Heart left ventricle (tissue), 16 donors: ENCODE measurements at regions of chr17 and their contacts with region 1.

Region 1: GRCh38 chr17:69414408-69415274 is at the start of gene MAP2K6:
- DNase-seq: peak; percentile 79 to 91 (median 81)
- ATAC-seq: peak; percentile 93 to 99 (median 98)
- H3K4me3 ChIP-seq: peak within 1 kb of the TSS; percentile 12 to 75 (median 59)
- H3K27ac ChIP-seq: peak within 1 kb of the TSS in 9 of 12 donors; percentile 4 to 62 (median 43)
- H3K4me1 ChIP-seq: peaks cover 0 to 35% (median 15%) of the 10 kb centered on the region in 12 donors
- H3K27me3 ChIP-seq: no peaks in the 10 kb centered on the region
- CTCF ChIP-seq: no peak
- POLR2A ChIP-seq: no peak
- total RNA-seq, gene MAP2K6: 0.83 to 5.1 (median 1.8) TPM

Region 2: DNA sequence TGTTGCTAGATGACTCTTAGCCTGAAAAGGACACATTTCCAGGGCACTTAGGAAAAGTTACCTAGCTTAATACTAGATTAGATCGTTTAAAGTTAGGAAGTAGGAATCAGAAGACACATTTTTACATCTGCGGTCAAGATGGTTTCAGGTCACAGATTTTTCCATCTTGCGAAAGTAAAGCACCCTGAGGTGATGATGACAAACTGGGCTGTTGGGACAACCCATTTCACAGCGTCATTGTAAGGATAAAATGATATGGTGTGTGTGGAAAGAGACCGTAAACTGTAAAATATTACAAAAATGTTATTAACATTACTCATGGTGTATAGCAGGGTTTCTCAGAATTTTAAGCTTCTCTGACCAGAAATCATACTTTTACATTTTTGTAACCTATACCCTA is 10.3 kb before region 1 on chr17:
- intact Hi-C with region 1: no loop called
- DNase-seq: no peak
- ATAC-seq: no peak
- H3K4me3 ChIP-seq: no peak overlapping the region
- H3K27ac ChIP-seq: no peak overlapping the region
- H3K4me1 ChIP-seq: no peaks in the 10 kb centered on the region
- H3K27me3 ChIP-seq: no peaks in the 10 kb centered on the region
- CTCF ChIP-seq: no peak
- POLR2A ChIP-seq: no peak

Region 3: DNA sequence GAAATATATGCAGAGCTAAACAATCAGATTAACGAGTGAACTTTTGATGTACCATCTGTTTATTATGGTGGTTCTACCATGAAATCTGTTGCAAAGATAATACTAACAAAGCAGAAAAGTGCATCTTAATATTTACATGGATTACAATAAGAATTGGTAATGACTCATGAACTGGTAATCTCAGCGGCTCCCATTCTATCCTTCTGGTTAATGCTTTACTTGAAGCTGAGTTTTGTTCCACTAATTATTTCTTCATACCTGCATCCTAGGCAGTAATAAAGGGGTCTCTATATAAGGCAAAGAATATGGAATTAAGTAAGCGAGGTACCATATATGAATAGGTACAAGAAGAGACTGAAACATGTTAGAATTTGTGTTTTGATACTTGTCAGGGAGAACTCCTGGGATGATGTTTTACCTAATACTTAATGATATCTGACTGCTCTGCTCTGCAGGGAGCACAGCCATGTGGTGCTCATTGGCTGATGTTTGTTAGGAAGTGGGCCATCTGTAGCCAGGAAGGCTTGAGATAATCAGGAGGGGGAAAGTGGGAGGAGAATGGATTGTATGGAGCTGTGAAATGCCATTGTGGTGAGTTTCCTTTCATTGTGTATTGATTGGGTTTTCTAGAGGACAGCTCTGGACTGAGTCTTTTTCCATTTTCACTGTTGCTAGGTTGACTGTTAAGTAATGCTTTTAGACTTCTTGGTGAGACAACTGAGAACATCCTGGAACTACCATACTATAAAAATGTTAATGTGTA is 52.4 kb after region 1 on chr17:
- intact Hi-C with region 1: loop called in 1 of 10 experiments (anchors 10 kb)
- DNase-seq: no peak
- ATAC-seq: peak in 3 of 4 donors; percentile 34 to 83 (median 41)
- H3K4me3 ChIP-seq: no peak overlapping the region
- H3K27ac ChIP-seq: no peak overlapping the region
- H3K4me1 ChIP-seq: peaks cover 0 to 4% (median 0%) of the 10 kb centered on the region in 12 donors
- H3K27me3 ChIP-seq: no peaks in the 10 kb centered on the region
- CTCF ChIP-seq: no peak
- POLR2A ChIP-seq: no peak

Region 4: GRCh38 chr17:69485901-69486643 is 71.4 kb after region 1 on chr17:
- intact Hi-C with region 1: loop called in 1 of 10 experiments (anchors 10 kb)
- DNase-seq: no peak
- ATAC-seq: peak in 3 of 4 donors; percentile 36 to 48 (median 44)
- H3K4me3 ChIP-seq: peak overlapping the region in 1 of 12 donors; percentile 24
- H3K27ac ChIP-seq: peak overlapping the region; percentile 6 to 83 (median 42)
- H3K4me1 ChIP-seq: peaks cover 0 to 26% (median 13%) of the 10 kb centered on the region in 12 donors
- H3K27me3 ChIP-seq: no peaks in the 10 kb centered on the region
- CTCF ChIP-seq: peak in 1 of 12 donors; percentile 10
- POLR2A ChIP-seq: no peak

Region 5: DNA sequence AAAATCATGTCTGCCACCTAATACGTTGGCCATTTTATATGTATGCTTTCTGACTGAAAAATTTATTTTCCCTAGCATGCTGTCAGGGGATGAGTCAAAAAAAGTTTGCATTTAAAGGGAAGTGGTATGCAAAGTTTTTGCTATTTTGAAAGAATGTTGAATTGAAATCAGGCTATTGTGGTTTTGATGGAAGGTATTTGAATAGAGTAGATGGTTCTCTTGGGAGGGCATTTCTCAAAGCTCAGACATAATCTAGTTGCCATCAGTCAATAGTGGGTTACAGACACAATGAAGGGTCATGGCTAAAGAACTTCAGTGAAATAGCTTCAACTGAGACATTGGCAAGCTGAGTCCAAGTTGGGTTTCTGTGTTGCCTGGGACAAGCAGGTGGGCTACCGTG is 102.3 kb after region 1 on chr17:
- intact Hi-C with region 1: loop called in 3 of 10 experiments (anchors 5 to 10 kb)
- DNase-seq: no peak
- ATAC-seq: no peak
- H3K4me3 ChIP-seq: no peak overlapping the region
- H3K27ac ChIP-seq: no peak overlapping the region
- H3K4me1 ChIP-seq: no peaks in the 10 kb centered on the region
- H3K27me3 ChIP-seq: no peaks in the 10 kb centered on the region
- CTCF ChIP-seq: no peak
- POLR2A ChIP-seq: no peak

Region 6: GRCh38 chr17:69523244-69523861 is 108.7 kb after region 1 on chr17:
- intact Hi-C with region 1: loop called in 3 of 10 experiments (anchors 5 to 10 kb)
- DNase-seq: peak in 1 of 5 donors; percentile 20
- ATAC-seq: peak in 2 of 4 donors; percentile 72 to 73
- H3K4me3 ChIP-seq: no peak overlapping the region
- H3K27ac ChIP-seq: no peak overlapping the region
- H3K4me1 ChIP-seq: no peaks in the 10 kb centered on the region
- H3K27me3 ChIP-seq: no peaks in the 10 kb centered on the region
- CTCF ChIP-seq: peak; percentile 55 to 74 (median 66)
- POLR2A ChIP-seq: no peak